ENCODE measurements at regions of chr11 and their contacts with region 1.

Region 1: GRCh38 chr11:96424693-96425092 is 34.9 kb downstream of the JRKL start:
- DNase-seq: no peak
- ATAC-seq: no peak
- H3K4me3 ChIP-seq: no peak overlapping the region
- H3K27ac ChIP-seq: no peak overlapping the region
- H3K4me1 ChIP-seq: 0 out of 4 replicates have a peak, but pooled peaks cover 0 to 3% of the 10 kb centered on the region in 2 experiments
- H3K27me3 ChIP-seq: no peaks in the 10 kb centered on the region
- CTCF ChIP-seq: no peak
- POLR2A ChIP-seq: no peak
- RAD21 ChIP-seq: no peak

Region 2: DNA sequence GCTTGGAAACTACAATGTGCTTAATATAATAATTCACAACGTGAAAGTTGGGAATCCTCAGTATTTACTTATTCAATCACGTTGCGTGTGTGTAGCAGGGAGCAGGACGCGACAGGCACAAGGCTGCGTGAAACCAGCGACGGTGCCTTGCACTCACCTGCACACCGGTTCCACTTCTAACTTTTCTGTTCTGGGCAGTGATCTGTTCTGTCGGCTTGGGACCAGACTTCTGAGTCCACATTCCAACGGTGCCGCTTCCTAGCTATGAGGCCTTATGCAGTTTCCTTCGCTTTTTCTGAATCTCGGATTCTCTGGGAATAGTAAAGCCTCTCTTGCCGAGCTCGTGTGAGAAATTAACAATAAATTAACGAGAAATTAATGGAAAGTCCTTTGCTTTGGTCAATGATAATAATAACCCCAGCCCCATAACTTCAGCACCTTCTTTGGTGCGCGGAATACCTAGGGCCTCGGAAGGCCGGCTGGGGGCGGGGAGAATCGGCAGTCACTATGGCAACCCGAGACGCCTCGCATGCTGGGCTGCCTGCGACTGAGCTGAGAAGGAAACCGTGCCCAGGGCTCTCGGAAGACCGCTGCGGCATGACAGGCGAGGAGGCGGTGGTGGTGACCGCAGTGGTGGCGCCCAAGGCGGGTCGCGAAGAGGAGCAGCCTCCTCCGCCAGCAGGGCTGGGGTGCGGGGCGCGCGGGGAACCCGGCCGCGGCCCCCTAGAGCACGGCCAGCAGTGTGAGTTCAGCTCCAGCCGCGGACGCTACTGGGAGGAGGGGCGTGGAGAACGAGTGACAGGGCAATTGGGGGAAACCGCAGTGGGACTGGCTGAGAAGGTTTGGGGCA is 1912.5 kb before region 1 on chr11 and contains the start of gene C11orf97:
- CTCF ChIA-PET with region 1: no interaction called
- POLR2A ChIA-PET with region 1: interaction called, 3 read pairs
- RAD21 ChIA-PET with region 1: no interaction called
- intact Hi-C with region 1: loop called (anchors 10 kb)
- DNase-seq: no peak
- ATAC-seq: no peak
- H3K4me3 ChIP-seq: no peak within 1 kb of the TSS
- H3K27ac ChIP-seq: no peak within 1 kb of the TSS
- H3K4me1 ChIP-seq: no peaks in the 10 kb centered on the region
- H3K27me3 ChIP-seq: no peaks in the 10 kb centered on the region
- CTCF ChIP-seq: no peak
- POLR2A ChIP-seq: no peak
- RAD21 ChIP-seq: no peak
- total RNA-seq, gene C11orf97: not detected

Region 3: DNA sequence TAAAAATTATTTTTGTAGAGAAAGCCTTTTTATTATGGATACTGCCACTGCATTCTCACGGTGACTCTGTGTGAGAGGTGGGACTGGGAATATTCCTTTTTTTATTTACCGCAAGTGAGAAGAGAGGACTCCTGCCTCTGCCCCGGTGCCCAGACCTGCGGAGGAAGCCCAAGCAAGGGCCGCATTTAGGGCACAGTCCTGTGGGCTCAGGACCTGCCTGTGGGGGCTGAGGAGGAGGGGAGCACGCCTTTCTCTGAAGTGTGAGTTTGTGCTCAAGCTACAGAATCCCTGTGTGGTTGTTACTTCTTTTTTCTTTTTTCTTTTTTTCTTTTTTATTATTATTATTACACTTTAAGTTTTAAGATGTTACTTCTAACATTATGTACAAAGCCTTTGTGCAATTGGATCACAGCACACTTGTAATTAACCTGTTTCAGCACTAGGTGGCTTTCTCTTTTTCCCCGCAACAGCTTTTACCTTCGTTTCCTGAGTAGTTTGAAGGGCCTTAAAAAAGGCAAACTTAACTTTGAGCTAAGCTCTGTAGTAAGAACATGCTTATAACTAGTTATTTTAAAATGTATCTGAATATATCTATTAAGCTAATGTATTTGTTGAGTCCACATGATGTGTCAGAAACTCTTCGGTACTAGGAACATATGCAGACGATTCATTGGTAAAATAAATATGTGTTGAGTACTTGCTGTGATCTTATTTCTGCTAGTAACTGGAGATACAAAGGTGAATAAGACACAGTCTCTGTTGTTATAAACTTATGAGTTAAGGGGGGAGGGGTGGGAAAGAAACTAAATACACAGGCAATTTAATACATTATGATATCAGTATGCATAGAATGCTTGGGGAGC is 1638.2 kb before region 1 on chr11:
- CTCF ChIA-PET with region 1: no interaction called
- POLR2A ChIA-PET with region 1: no interaction called
- RAD21 ChIA-PET with region 1: no interaction called
- intact Hi-C with region 1: loop called (anchors 10 kb)
- DNase-seq: no peak
- ATAC-seq: no peak
- H3K4me3 ChIP-seq: no peak overlapping the region
- H3K27ac ChIP-seq: no peak overlapping the region
- H3K4me1 ChIP-seq: peaks cover 29 to 48% of the 10 kb centered on the region in 2 experiments
- H3K27me3 ChIP-seq: no peaks in the 10 kb centered on the region
- CTCF ChIP-seq: peak; percentile 53 to 63 (median 55); a peak in 5 of 6 replicates
- POLR2A ChIP-seq: no peak
- RAD21 ChIP-seq: peak; percentile 54

Region 4: DNA sequence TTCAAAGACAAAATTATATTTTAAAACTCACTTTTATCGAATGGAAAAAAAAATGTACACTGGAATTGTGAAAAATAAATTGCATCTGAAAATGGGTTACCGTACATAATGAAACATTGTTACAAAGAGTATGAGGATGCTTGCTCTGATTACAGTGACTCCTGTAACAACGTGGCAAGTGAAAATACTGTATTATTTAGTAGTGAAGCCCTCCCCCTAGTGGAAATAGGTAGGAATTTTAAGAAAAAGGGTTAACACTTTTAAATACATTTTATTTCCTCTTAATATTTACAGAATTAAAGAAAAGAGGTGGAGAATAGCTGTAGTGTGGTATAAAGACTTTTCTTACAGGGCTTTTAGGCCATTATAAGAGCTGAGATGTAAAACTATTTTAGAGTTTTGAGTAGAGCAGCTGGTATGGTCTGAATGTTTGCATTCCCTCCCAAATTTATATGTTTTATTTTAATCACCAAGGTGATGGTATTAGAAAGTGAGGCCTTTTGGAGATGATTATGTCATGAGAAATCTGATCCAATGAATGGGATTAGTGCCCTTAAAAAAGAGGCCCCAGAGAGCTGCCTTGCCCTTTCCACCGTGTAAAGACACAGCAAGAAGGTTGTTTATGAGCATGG is 660.3 kb before region 1 on chr11:
- CTCF ChIA-PET with region 1: interaction called, 3 read pairs
- POLR2A ChIA-PET with region 1: no interaction called
- RAD21 ChIA-PET with region 1: no interaction called
- intact Hi-C with region 1: loop called (anchors 10 kb)
- DNase-seq: peak; percentile 27
- ATAC-seq: peak; percentile 72; the same call in 1 of the 2 replicates
- H3K4me3 ChIP-seq: no peak overlapping the region
- H3K27ac ChIP-seq: no peak overlapping the region
- H3K4me1 ChIP-seq: no peaks in the 10 kb centered on the region
- H3K27me3 ChIP-seq: no peaks in the 10 kb centered on the region
- CTCF ChIP-seq: peak; percentile 42 to 79 (median 66); a peak in 5 of 6 replicates
- POLR2A ChIP-seq: no peak
- RAD21 ChIP-seq: peak; percentile 81

Region 5: DNA sequence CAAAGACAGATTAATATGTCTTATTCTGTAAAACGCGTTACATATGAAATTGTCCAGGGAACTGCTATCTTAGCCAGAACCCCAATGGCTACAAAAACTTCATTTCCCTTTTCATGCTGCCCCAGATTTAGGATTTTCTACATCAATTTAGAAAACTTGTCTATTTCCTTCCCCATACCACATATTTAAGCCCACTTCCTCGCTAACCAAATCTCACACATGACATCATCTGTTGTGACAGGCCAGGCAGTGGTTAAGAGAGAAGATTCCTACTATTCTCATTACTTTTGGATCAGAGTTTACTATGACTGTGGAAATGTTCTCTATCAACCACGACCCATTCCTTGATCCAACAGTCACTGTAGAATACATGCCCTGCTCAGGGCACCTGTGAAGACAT is 50.9 kb before region 1 on chr11:
- CTCF ChIA-PET with region 1: no interaction called
- POLR2A ChIA-PET with region 1: no interaction called
- RAD21 ChIA-PET with region 1: no interaction called
- intact Hi-C with region 1: no loop called
- DNase-seq: no peak
- ATAC-seq: no peak
- H3K4me3 ChIP-seq: no peak overlapping the region
- H3K27ac ChIP-seq: no peak overlapping the region
- H3K4me1 ChIP-seq: no peaks in the 10 kb centered on the region
- H3K27me3 ChIP-seq: no peaks in the 10 kb centered on the region
- CTCF ChIP-seq: no peak
- POLR2A ChIP-seq: no peak
- RAD21 ChIP-seq: no peak

Region 6: DNA sequence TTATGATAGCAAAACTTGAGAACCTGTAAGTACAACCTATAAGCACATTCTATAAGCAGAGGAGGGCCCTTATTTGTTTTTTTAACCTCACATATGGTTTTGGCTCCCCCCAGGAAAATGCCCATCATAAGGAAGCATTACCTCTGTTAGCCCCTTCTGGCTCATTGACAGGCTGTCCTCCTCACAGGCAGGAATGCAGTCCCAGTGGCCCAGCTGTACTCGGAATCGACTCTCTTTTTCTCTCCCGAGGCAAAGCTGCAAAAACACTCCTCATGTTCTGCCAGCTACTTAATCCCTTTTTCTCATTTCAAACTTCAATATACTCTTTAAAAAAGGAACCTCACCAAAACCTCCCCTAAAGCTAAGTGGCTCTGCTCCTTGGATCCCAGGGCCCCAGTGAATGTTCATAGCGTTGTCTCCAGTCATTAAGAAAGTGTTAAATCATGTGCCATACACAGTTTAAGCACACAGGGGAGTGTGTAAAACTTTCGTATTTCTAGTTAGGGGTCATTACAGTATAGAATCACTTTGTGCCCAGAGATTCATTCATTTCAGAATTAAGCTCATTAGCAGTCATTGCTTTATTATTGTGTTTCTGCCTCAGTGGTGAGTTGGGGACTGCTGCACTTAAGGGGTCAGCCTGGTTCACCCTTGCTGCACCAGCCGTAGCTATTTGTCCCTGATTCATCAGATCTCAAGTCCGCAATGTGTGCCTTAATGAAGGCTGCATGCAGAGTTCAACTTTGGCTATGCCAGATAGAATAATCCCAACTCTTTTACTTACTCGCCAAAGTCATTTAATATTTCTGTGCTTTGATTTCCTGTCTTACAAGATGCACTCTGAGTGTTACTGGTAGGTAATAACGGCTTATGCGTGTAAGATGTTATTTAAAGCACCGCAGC is 22.8 kb after region 1 on chr11:
- CTCF ChIA-PET with region 1: no interaction called
- POLR2A ChIA-PET with region 1: no interaction called
- RAD21 ChIA-PET with region 1: no interaction called
- intact Hi-C with region 1: no loop called
- DNase-seq: no peak
- ATAC-seq: no peak
- H3K4me3 ChIP-seq: no peak overlapping the region
- H3K27ac ChIP-seq: no peak overlapping the region
- H3K4me1 ChIP-seq: no peaks in the 10 kb centered on the region
- H3K27me3 ChIP-seq: peaks cover 32% of the 10 kb centered on the region
- CTCF ChIP-seq: no peak
- POLR2A ChIP-seq: no peak
- RAD21 ChIP-seq: no peak